Activated CD8-positive, alpha-beta T cell treated with anti-CD3 and anti-CD28 coated beads, Interleukin-2, amount 10 ng/mL, durations not matched to agents 7 days and 5 days (primary cell): ENCODE measurements at regions of chr9 and their contacts with region 1.

Region 1: DNA sequence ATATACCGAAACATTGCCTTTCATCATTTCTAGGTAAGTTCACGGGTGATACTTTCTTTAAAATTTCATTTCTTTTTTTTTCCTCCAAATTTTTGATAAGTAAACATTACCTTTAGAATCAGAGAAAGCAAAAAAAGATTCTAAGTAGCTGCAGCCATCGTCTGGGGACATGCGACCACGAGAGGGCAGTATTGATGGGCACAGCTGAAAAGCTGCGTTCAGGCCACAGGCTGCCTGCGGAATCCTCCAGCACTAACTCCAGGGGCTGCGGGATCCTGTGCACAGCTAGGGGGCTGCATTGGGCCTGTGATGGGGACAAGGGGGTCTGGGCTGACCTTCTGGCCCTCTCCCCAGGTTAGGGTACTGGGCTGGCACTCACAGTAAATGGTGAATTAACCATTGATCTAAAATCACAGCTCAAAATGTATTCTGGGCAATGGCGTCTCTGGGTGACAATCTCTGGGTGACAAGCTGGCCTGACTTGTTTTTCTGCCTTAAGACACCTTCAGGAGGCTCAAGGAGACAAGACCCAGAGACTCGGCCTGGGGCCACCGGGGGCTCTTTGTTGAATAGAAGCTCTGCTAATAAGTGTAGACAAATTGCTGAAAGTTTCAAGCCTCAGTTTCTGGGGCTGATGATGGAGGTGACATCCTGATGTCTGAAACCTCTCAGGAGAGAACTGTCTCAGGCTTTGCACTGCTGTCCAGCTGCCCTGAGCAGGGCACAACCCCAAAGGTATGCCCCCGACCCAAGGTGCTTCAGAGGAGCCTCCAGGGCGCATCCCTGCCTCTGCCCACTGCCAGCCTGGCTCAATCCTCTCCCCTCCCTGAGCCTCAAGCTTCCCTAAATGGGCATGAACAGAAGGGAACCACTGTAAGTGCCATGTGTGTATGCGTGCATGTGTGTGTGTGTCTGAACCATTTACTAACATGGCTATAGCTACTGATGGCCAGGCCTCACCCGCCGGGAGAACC is 44.3 kb upstream of the SARDH start:
- DNase-seq: peak; percentile 80
- ATAC-seq: peak; percentile 64
- H3K4me3 Mint-ChIP-seq: no peak overlapping the region
- H3K27ac Mint-ChIP-seq: no peak overlapping the region
- H3K4me1 Mint-ChIP-seq: peaks cover 16% of the 10 kb centered on the region
- H3K27me3 Mint-ChIP-seq: no peaks in the 10 kb centered on the region

Region 2: DNA sequence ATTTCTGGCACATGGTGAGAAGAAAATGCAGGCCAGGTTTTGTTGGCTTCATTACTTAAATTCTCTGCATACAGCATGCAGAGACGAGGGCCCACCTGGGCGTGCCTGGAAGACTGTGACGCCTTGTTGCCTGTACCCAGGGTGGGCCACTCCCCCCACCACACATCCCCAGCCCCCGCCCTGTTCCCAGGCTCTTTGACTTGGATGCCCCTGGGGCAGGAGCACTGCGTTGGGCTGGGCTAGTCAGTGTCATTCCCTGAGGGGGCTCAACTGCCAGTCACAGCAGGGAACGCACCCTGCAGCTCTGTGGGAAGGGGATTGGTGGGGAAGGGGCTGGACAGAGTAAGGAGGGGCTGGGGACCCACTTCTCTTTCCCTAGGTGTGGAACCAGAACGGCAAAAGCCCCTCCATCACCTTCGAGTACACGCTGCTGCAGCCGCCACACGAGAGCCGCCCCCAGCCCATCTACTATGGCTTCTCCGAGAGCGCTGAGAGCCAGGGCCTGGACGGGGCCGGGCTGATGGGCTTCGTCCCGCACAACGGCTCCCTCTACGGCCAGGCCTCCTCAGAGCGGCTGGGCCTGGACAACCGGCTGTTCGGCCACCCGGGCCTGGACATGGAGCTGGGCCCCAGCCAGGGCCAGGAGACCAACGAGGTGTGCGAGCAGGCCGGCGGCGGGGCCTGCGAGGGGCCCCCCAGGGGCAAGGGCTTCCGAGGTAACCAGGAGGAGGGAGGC is 228.3 kb before region 1 on chr9:
- CTCF ChIA-PET with region 1: no interaction called
- POLR2A ChIA-PET with region 1: no interaction called
- DNase-seq: no peak
- ATAC-seq: no peak
- H3K4me3 Mint-ChIP-seq: no peak overlapping the region
- H3K27ac Mint-ChIP-seq: no peak overlapping the region
- H3K4me1 Mint-ChIP-seq: peaks cover 11% of the 10 kb centered on the region
- H3K27me3 Mint-ChIP-seq: no peaks in the 10 kb centered on the region

Region 3: DNA sequence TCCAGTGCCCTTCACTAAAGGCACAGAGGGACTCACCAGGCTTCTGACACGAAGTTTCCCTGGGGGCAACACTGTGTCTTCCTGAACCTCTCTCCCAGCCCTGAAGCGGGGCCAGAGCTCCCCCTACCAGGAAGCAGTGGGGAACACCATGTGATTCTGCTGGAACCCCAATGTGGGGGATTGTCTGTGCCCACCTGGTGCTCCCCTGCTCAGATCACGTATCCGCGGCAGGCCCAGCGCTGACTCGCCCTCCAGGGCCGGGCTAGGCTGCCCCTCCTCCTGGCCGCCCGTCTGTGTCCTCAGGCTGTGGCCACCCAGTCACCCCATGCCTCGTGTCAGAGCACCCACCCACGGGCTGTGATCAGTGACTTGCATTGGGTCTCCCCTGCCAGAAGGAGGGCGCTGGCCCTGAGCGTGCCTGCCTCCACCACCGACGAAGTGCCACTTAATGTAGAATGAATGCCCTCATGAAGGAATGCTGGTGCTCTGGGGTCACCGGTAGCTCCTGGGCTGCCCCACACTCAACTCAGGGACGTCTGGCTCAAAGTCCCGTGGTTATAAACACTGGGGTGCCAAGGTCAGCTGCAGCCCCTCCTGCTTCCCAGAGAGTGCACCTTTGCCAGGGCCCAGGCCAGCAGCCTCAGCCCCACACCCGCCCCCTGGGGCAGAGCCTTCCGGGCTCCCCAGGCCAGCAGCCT is 66.4 kb before region 1 on chr9:
- CTCF ChIA-PET with region 1: no interaction called
- POLR2A ChIA-PET with region 1: no interaction called
- DNase-seq: peak; percentile 49
- ATAC-seq: peak; percentile 63
- H3K4me3 Mint-ChIP-seq: no peak overlapping the region
- H3K27ac Mint-ChIP-seq: no peak overlapping the region
- H3K4me1 Mint-ChIP-seq: peaks cover 3% of the 10 kb centered on the region
- H3K27me3 Mint-ChIP-seq: peaks cover under 1% of the 10 kb centered on the region

Region 4: DNA sequence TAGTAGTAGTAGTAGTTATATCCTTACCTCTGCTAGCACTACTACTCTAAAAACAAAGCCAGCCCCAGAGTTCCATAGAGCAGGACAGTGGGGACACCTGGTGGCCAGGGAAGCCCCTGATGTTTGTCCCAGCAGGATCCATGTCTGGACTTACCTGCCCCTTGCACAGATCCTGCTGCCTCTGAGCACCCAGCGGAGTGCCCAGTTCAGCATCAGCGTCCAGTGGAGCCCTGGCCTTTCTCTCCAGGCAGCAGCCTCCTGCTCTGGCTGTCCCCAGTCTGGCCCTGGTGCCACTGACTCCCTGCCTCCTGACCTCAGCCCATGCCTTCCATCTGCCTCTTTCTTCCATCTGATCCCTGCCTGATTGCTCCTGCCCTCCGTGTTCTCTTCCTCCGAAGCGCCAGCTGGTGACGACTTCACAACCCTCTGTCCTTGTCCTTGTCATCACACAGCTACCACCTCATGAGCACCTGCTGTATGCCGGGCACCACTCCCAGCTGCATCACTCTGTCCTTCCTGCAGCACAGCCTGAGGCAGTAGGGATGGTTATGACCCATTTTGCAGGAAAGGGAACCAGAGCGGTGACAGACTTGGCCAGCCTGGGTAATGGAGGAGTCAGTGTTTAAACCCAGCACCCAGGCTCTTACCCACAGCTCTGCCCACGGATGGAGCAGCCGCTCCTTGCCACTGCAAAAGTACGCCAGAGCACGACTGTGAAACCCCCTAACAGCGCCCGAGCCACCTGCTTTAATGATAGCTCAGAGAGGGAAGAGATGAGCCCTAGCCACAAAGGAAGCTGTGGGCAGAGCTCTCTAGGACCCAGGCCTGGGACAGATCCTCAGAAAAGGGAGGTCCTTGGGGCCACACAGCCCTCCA is 55.8 kb before region 1 on chr9:
- CTCF ChIA-PET with region 1: no interaction called
- POLR2A ChIA-PET with region 1: no interaction called
- DNase-seq: peak; percentile 70
- ATAC-seq: peak; percentile 72
- H3K4me3 Mint-ChIP-seq: no peak overlapping the region
- H3K27ac Mint-ChIP-seq: no peak overlapping the region
- H3K4me1 Mint-ChIP-seq: peaks cover 9% of the 10 kb centered on the region
- H3K27me3 Mint-ChIP-seq: peaks cover 11% of the 10 kb centered on the region

Region 5: DNA sequence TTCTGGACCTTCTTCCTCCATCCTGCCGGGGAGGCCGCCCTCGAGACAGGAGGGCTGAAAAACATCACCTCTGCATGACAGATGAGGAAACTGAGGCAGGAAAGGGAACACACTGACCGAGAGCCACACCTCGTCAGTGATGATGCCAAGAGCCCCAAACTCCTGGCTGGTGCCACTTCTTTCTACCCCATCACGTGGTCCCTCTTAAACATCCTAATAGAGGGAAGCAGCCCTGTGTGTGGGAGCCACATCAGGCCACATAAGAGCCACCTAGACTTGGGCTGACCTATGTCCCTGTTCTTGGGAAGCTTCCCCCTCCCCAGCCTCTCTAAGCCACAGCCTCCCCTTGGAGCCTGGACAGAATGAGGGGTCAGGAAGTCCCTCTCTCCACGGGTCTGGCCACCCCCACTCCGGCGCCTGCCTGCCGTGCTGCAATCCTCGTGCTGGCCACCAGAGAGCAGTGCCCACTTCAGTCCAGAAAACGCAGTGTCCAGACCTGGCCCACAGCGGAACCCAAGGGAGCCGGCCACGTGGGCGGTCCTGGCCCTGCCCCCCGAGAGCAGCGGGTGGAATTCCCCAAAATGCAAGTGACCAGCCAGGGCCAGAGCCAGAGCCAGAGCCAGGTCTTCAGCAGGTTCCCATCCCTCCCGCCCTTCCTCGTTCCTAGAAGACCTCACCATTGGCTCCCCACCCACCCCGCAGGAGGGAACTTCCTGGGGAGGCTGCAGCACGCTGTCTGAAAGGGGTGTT is 10.5 kb after region 1 on chr9:
- CTCF ChIA-PET with region 1: interaction called, 14 read pairs
- POLR2A ChIA-PET with region 1: no interaction called
- DNase-seq: peak; percentile 60
- ATAC-seq: peak; percentile 71
- H3K4me3 Mint-ChIP-seq: no peak overlapping the region
- H3K27ac Mint-ChIP-seq: no peak overlapping the region
- H3K4me1 Mint-ChIP-seq: peaks cover 7% of the 10 kb centered on the region
- H3K27me3 Mint-ChIP-seq: no peaks in the 10 kb centered on the region